ENCODE measurements at regions of chr6 and their contacts with region 1.

Region 1: GRCh38 chr6:15062516-15063252 is 183.2 kb upstream of the JARID2 start:
- DNase-seq: peak; percentile 55 to 74
- ATAC-seq: peak; percentile 92 to 93
- H3K4me3 ChIP-seq: no peak overlapping the region
- H3K27ac ChIP-seq: peak overlapping the region; percentile 80 to 93 (median 84)
- H3K4me1 ChIP-seq: peaks cover 10 to 17% of the 10 kb centered on the region in 2 donors
- H3K27me3 ChIP-seq: no peaks in the 10 kb centered on the region
- CTCF ChIP-seq: no peak
- POLR2A ChIP-seq: no peak

Region 2: DNA sequence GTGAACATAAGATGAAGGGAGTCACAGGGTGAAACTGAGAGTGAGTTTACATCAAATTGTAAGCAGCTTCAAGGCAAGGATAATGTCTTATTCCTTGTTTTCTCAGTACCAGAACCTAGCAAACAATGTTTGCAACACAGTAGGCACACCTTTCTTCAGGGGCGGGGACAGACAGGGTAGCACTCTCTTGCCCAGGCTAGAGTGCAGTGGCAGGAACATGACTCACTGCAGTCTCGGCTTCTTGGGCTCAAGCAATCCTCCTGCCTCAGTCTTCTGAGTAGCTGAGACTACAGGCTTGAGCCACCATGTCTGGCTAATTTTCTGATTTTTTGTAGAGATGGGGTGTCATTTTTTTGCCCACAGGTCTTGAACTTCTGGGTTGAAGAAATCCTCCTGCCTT is 645.3 kb before region 1 on chr6:
- in situ Hi-C with region 1: no loop called
- intact Hi-C with region 1: no loop called
- DNase-seq: no peak
- ATAC-seq: no peak
- H3K4me3 ChIP-seq: no peak overlapping the region
- H3K27ac ChIP-seq: no peak overlapping the region
- H3K4me1 ChIP-seq: no peaks in the 10 kb centered on the region
- H3K27me3 ChIP-seq: no peaks in the 10 kb centered on the region
- CTCF ChIP-seq: no peak
- POLR2A ChIP-seq: no peak

Region 3: DNA sequence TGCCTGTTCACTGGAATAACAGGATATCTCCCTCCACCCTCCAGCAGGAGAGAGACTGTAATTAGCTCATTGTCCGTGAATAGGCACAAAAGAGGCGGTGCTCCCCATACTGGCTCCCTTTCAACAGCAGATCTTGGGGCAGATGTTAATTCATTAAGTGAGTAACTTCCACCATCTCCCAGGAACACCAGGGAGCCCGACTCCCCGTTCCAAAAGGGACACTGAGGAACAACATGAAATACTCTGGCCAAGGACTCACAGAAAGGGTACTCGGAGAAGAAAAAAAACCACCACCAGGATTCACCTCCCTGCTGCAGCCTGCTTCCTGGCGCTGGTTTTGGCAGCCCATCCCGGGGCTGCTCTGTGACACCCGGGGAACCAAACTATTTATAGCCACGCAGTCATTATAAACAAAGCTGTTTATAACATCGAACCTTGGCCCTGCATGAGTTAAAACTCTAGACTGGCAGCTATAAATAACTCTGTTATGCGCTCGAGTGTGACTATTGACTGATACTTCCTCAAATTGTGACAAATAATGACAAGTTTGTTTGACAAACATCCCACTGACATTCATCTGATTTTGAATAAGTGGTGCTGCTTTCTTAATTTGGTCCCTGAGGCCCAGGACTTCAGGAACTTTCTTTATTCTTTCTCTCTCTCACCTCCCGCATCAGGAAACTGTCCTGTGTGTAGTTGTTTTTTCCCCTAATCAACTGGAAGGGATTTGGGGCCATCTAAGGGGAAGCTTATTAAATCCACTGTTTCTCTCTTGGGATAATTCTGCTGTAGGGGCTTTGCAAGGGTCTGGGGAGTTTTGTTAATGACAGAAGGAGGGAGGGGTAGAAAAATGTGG is 423.6 kb before region 1 on chr6:
- in situ Hi-C with region 1: no loop called
- intact Hi-C with region 1: loop called (anchors 10 kb)
- DNase-seq: peak; percentile 50 to 74
- ATAC-seq: peak; percentile 92 to 94
- H3K4me3 ChIP-seq: peak overlapping the region; percentile 44 to 54 (median 48)
- H3K27ac ChIP-seq: peak overlapping the region; percentile 83 to 94 (median 86)
- H3K4me1 ChIP-seq: peaks cover 45 to 46% of the 10 kb centered on the region in 2 donors
- H3K27me3 ChIP-seq: no peaks in the 10 kb centered on the region
- CTCF ChIP-seq: peak in 2 of 5 experiments; percentile 20
- POLR2A ChIP-seq: peak in 1 of 2 donors; percentile 51

Region 4: GRCh38 chr6:14703586-14703985 is 359.1 kb before region 1 on chr6:
- in situ Hi-C with region 1: no loop called
- intact Hi-C with region 1: no loop called
- DNase-seq: no peak
- ATAC-seq: no peak
- H3K4me3 ChIP-seq: no peak overlapping the region
- H3K27ac ChIP-seq: no peak overlapping the region
- H3K4me1 ChIP-seq: peaks cover 5 to 25% of the 10 kb centered on the region in 2 donors
- H3K27me3 ChIP-seq: no peaks in the 10 kb centered on the region
- CTCF ChIP-seq: no peak
- POLR2A ChIP-seq: no peak

Region 5: GRCh38 chr6:14876778-14877613 is 185.7 kb before region 1 on chr6:
- in situ Hi-C with region 1: loop called in 1 of 4 experiments (anchors 10 kb)
- intact Hi-C with region 1: no loop called
- DNase-seq: peak in 1 of 2 donors; percentile 48
- ATAC-seq: peak; percentile 91 to 93
- H3K4me3 ChIP-seq: peak overlapping the region in 2 of 4 donors; percentile 14 to 26
- H3K27ac ChIP-seq: peak overlapping the region; percentile 75 to 88 (median 76)
- H3K4me1 ChIP-seq: peaks cover 24 to 46% of the 10 kb centered on the region in 2 donors
- H3K27me3 ChIP-seq: no peaks in the 10 kb centered on the region
- CTCF ChIP-seq: no peak
- POLR2A ChIP-seq: peak in 1 of 2 donors; percentile 44

Region 6: GRCh38 chr6:14921170-14921569 is 141.5 kb before region 1 on chr6:
- in situ Hi-C with region 1: no loop called
- intact Hi-C with region 1: loop called (anchors 2 kb)
- DNase-seq: peak; percentile 60 to 84
- ATAC-seq: peak; percentile 4 to 8
- H3K4me3 ChIP-seq: no peak overlapping the region
- H3K27ac ChIP-seq: peak overlapping the region; percentile 87 to 97 (median 92)
- H3K4me1 ChIP-seq: peaks cover 41 to 55% of the 10 kb centered on the region in 2 donors
- H3K27me3 ChIP-seq: no peaks in the 10 kb centered on the region
- CTCF ChIP-seq: no peak
- POLR2A ChIP-seq: peak in 1 of 2 donors; percentile 23

Region 7: GRCh38 chr6:15017261-15017660 is 45.4 kb before region 1 on chr6:
- in situ Hi-C with region 1: no loop called
- intact Hi-C with region 1: no loop called
- DNase-seq: peak in 1 of 2 donors; percentile 33
- ATAC-seq: peak; percentile 39 to 77
- H3K4me3 ChIP-seq: peak overlapping the region in 3 of 4 donors; percentile 0 to 21 (median 20)
- H3K27ac ChIP-seq: no peak overlapping the region
- H3K4me1 ChIP-seq: peaks cover 0 to 9% of the 10 kb centered on the region in 2 donors
- H3K27me3 ChIP-seq: no peaks in the 10 kb centered on the region
- CTCF ChIP-seq: no peak
- POLR2A ChIP-seq: no peak

Region 8: DNA sequence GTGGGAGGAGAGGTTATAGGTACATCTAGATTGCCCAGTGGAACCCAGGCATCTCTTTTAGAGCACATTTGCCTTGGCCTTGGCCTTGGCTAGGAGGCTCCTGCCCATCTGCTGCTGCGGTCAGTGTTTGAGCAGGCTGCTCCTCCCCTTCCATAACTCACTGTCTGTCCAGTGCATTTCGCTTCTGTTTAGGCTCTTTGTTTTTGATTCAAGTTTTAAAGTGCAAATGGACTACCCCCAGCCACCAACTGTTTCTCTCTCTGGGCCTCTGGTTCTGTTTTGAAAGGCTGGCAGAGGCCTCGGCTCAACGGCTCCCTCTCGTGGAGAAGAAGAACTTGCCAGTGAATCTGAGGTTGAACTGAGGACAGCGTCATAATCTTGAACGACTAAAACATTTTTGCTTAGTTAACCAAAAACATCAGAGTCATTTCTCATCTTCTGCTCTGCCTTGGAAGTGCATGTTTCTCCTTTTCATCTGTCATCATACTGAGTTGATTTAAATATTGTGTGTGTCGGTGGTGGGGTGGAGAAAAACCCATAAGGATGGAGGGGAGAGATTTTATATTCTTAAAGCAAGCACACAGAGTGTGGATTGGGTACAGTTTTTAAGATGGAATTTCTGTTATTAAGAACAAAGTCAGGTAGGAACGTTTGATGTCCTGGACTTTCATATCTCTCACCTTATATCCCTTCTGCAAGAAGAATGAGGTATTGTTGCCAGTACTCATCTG is 428.7 kb after region 1 on chr6:
- in situ Hi-C with region 1: no loop called
- intact Hi-C with region 1: loop called (anchors 10 kb)
- DNase-seq: peak; percentile 59 to 77
- ATAC-seq: peak; percentile 42 to 56
- H3K4me3 ChIP-seq: no peak overlapping the region
- H3K27ac ChIP-seq: peak overlapping the region; percentile 55 to 73 (median 69)
- H3K4me1 ChIP-seq: peaks cover 38 to 45% of the 10 kb centered on the region in 2 donors
- H3K27me3 ChIP-seq: no peaks in the 10 kb centered on the region
- CTCF ChIP-seq: peak; percentile 86 to 94 (median 93)
- POLR2A ChIP-seq: no peak